ENCODE measurements at regions of chr3 and their contacts with region 1.

Region 1: DNA sequence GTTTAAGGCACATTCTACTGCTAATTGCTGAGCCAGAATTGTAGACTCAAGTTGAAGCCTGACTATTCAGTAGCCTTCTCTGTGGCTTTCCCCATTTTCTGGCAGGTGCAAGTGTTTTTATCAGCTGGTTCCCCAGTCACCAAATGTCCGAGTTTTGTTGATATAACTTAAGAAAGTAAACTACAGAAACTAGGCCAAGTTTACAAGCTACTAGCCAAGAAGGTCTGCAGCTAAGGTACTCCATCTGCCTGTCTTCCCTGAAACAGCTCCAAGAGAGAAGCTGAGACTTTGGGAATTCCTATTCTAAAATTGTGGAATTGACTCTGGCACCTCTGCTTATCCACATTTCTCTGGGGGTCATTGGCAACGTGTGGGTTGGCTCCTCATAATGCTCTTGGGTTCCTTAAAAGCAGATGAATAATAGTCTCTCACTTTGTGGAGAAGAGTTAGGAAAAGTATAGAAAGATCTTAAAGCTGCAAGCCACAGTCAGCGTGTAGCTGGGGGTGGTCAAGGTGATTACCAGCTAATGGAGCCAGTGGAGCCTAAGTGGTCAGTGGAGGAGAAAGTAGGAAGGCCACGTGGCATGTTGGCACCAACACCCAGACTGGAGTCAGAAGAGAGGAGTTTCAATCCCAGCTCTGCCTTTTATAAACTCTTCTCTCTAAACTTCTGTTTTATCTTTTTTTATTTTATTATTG is 128.8 kb downstream of the PEX5L start:
- DNase-seq: no peak
- ATAC-seq: no peak
- H3K4me3 ChIP-seq: no peak overlapping the region
- H3K4me3 Mint-ChIP-seq: no peak overlapping the region
- H3K27ac ChIP-seq: no peak overlapping the region
- H3K27ac Mint-ChIP-seq: no peak overlapping the region
- H3K4me1 ChIP-seq: no peaks in the 10 kb centered on the region
- H3K4me1 Mint-ChIP-seq: no peaks in the 10 kb centered on the region
- H3K27me3 ChIP-seq: peaks cover 0 to 3% of the 10 kb centered on the region in 2 experiments
- H3K27me3 Mint-ChIP-seq: peaks cover 4% of the 10 kb centered on the region
- CTCF ChIP-seq: no peak

Region 2: GRCh38 chr3:179829401-179829800 is 78.5 kb before region 1 on chr3:
- CTCF ChIA-PET with region 1: no interaction called
- POLR2A ChIA-PET with region 1: no interaction called
- intact Hi-C with region 1: loop called in 1 of 2 experiments (anchors 5 kb)
- DNase-seq: no peak
- ATAC-seq: no peak
- H3K4me3 ChIP-seq: no peak overlapping the region
- H3K4me3 Mint-ChIP-seq: no peak overlapping the region
- H3K27ac ChIP-seq: no peak overlapping the region
- H3K27ac Mint-ChIP-seq: no peak overlapping the region
- H3K4me1 ChIP-seq: no peaks in the 10 kb centered on the region
- H3K4me1 Mint-ChIP-seq: no peaks in the 10 kb centered on the region
- H3K27me3 ChIP-seq: peaks cover 0 to 4% of the 10 kb centered on the region in 2 experiments
- H3K27me3 Mint-ChIP-seq: no peaks in the 10 kb centered on the region
- CTCF ChIP-seq: no peak

Region 3: DNA sequence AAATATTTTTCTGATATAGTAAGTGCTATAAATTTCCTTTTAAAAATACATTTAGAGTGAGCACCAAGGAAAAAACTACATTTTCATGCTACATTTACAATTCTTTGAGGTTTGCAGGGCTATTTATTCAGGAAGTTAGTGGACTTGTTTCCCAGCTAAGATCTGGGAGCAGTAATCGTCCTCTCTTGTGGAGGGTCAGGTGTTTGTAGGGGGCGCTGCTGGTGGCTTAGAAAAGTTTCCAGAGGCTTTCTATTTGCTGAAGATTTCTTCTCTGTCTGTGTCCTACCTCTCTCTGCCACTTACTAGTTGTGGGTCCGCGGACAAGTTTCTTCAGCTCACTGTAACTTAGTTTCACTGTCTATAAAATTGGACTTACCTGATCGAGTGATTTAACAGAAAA is 35.1 kb before region 1 on chr3:
- CTCF ChIA-PET with region 1: no interaction called
- POLR2A ChIA-PET with region 1: no interaction called
- intact Hi-C with region 1: no loop called
- DNase-seq: no peak
- ATAC-seq: no peak
- H3K4me3 ChIP-seq: no peak overlapping the region
- H3K4me3 Mint-ChIP-seq: no peak overlapping the region
- H3K27ac ChIP-seq: no peak overlapping the region
- H3K27ac Mint-ChIP-seq: no peak overlapping the region
- H3K4me1 ChIP-seq: no peaks in the 10 kb centered on the region
- H3K4me1 Mint-ChIP-seq: no peaks in the 10 kb centered on the region
- H3K27me3 ChIP-seq: no peaks in the 10 kb centered on the region
- H3K27me3 Mint-ChIP-seq: no peaks in the 10 kb centered on the region
- CTCF ChIP-seq: no peak